ENCODE measurements at regions of chr16 and their contacts with region 1.

Region 1: GRCh38 chr16:14186007-14186794 is 115.1 kb downstream of the MRTFB start:
- DNase-seq: no peak
- ATAC-seq: peak; percentile 46 to 73 (median 58)
- H3K4me3 ChIP-seq: peak overlapping the region in 1 of 4 donors; percentile 13
- H3K27ac ChIP-seq: peak overlapping the region in 1 of 4 donors; percentile 18
- H3K4me1 ChIP-seq: peaks cover 0 to 11% (median 7%) of the 10 kb centered on the region in 3 donors
- H3K27me3 ChIP-seq: no peaks in the 10 kb centered on the region
- CTCF ChIP-seq: peak in 3 of 4 donors; percentile 14 to 28 (median 28)

Region 2: GRCh38 chr16:14013571-14014282 is 172.5 kb before region 1 on chr16:
- intact Hi-C with region 1: no loop called
- DNase-seq: peak in 3 of 6 donors; percentile 34 to 36 (median 34)
- ATAC-seq: peak; percentile 60 to 77 (median 73)
- H3K4me3 ChIP-seq: no peak overlapping the region
- H3K27ac ChIP-seq: peak overlapping the region; percentile 53 to 75 (median 62)
- H3K4me1 ChIP-seq: peaks cover 13 to 29% (median 27%) of the 10 kb centered on the region in 3 donors
- H3K27me3 ChIP-seq: no peaks in the 10 kb centered on the region
- CTCF ChIP-seq: no peak

Region 3: GRCh38 chr16:14088155-14088753 is 97.9 kb before region 1 on chr16:
- intact Hi-C with region 1: loop called in 1 of 3 experiments (anchors 10 kb)
- DNase-seq: no peak
- ATAC-seq: peak in 3 of 4 donors; percentile 39 to 56 (median 42)
- H3K4me3 ChIP-seq: no peak overlapping the region
- H3K27ac ChIP-seq: peak overlapping the region in 1 of 4 donors; percentile 37
- H3K4me1 ChIP-seq: peaks cover 14 to 27% (median 17%) of the 10 kb centered on the region in 3 donors
- H3K27me3 ChIP-seq: no peaks in the 10 kb centered on the region
- CTCF ChIP-seq: no peak

Measured in pancreas (tissue), 10 donors.